ENCODE measurements at regions of chr3 and their contacts with region 1.

Region 1: DNA sequence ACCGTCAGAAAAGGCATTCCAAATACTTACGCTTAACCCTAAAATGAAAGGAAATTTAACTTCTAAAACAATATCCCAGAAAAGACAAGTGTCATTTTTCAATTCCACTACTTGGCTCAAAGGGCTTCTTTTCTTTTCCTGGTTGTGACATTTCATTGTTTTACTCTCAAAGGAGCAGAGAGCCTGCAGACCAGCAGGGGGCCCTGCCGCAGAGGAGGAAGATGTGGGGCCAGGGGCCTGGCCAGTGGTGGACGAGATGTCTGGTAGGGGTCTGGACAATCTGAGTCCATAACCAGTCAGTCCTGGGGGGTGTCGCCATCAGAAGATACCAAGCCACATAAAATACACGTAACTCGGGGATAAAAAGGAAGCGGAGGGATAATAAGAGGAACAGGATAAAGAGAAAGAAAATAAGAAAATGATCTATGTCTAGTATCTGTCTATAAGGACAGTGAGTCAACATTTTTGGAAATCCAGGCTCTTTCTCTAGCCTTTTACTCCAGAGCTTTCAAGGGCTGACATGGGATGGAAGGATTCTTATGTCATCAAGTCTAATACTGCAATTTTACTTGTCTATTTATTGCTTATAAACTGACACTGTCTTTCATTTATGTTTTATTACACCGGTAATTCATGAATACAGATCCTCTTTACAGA is 54.2 kb upstream of the ARHGEF3 start:
- DNase-seq: peak in 8 of 14 experiments; percentile 10 to 51 (median 28)
- ATAC-seq: no peak
- H3K4me3 ChIP-seq: no peak overlapping the region
- H3K4me3 Mint-ChIP-seq: no peak overlapping the region
- H3K27ac ChIP-seq: no peak overlapping the region
- H3K27ac Mint-ChIP-seq: no peak overlapping the region
- H3K4me1 ChIP-seq: peaks cover 36% of the 10 kb centered on the region
- H3K4me1 Mint-ChIP-seq: peaks cover 52% of the 10 kb centered on the region
- H3K27me3 ChIP-seq: no peaks in the 10 kb centered on the region
- H3K27me3 Mint-ChIP-seq: no peaks in the 10 kb centered on the region
- CTCF ChIP-seq: peak; percentile 64

Region 2: DNA sequence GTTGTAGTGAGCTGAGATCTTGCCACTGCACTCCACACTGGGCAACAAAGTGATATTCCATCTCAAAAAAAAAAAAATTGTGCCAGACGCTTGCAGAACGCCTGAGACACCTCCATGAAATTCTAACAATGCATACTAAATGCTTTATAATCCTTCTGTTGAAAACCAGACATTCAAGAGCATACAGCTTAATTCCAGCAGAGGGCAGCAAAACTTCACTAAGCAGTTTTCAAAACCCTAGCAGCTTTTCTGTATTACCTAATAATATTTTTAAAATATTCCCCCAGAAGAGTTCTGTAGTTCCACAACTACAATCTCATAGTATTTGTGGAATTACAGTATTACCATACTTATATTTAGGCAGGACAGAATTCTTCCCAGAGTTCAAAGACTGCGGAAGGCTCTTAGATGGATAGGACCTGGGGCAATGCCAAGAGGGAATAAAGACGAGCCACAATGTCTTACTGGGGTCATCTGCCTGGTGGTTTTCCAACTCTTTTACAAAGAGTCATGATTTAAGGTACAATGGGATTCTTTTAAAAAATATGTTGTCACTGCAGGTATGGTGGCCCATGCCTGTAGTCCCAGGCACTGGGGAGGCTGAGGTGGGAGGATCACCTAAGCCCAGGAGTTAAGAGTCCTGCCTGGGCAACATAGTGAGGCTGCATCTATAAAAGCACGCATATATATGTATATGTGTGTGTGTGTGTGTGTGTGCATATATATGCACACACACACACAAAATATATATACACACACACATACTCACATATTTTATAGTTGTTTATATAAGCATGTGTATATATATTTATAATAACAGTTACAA is 153.3 kb before region 1 on chr3:
- CTCF ChIA-PET with region 1: no interaction called
- POLR2A ChIA-PET with region 1: no interaction called
- intact Hi-C with region 1: loop called in 1 of 2 experiments (anchors 5 kb)
- DNase-seq: peak in 11 of 14 experiments; percentile 14 to 86 (median 40)
- ATAC-seq: peak; percentile 77
- H3K4me3 ChIP-seq: no peak overlapping the region
- H3K4me3 Mint-ChIP-seq: no peak overlapping the region
- H3K27ac ChIP-seq: no peak overlapping the region
- H3K27ac Mint-ChIP-seq: no peak overlapping the region
- H3K4me1 ChIP-seq: peaks cover 12% of the 10 kb centered on the region
- H3K4me1 Mint-ChIP-seq: peaks cover 29% of the 10 kb centered on the region
- H3K27me3 ChIP-seq: no peaks in the 10 kb centered on the region
- H3K27me3 Mint-ChIP-seq: no peaks in the 10 kb centered on the region
- CTCF ChIP-seq: peak; percentile 84